Activated B cell treated with CpG ODN at 0.5 μM for 24 hours (primary cell): ENCODE measurements at regions of chr2 and their contacts with region 1.

Region 1: GRCh38 chr2:74037379-74037860 is 52.7 kb downstream of the TET3 start:
- DNase-seq: no peak
- ATAC-seq: peak; percentile 73
- H3K4me3 Mint-ChIP-seq: peak overlapping the region; percentile 62
- H3K27ac Mint-ChIP-seq: peak overlapping the region; percentile 80
- H3K4me1 Mint-ChIP-seq: peaks cover 90% of the 10 kb centered on the region
- H3K27me3 Mint-ChIP-seq: no peaks in the 10 kb centered on the region
- CTCF ChIP-seq: no peak

Region 2: GRCh38 chr2:74025971-74026612 is 11.3 kb before region 1 on chr2:
- CTCF ChIA-PET with region 1: no interaction called
- POLR2A ChIA-PET with region 1: interaction called, 6 read pairs
- intact Hi-C with region 1: loop called (anchors 1 kb)
- DNase-seq: no peak
- ATAC-seq: peak; percentile 37
- H3K4me3 Mint-ChIP-seq: no peak overlapping the region
- H3K27ac Mint-ChIP-seq: peak overlapping the region; percentile 82
- H3K4me1 Mint-ChIP-seq: peaks cover 77% of the 10 kb centered on the region
- H3K27me3 Mint-ChIP-seq: no peaks in the 10 kb centered on the region
- CTCF ChIP-seq: no peak

Region 3: GRCh38 chr2:74052732-74053597 is 15.5 kb after region 1 on chr2:
- CTCF ChIA-PET with region 1: no interaction called
- POLR2A ChIA-PET with region 1: interaction called, 4 read pairs
- intact Hi-C with region 1: loop called (anchors 2 kb)
- DNase-seq: no peak
- ATAC-seq: peak; percentile 91
- H3K4me3 Mint-ChIP-seq: peak overlapping the region; percentile 2
- H3K27ac Mint-ChIP-seq: peak overlapping the region; percentile 13
- H3K4me1 Mint-ChIP-seq: peaks cover 28% of the 10 kb centered on the region
- H3K27me3 Mint-ChIP-seq: no peaks in the 10 kb centered on the region
- CTCF ChIP-seq: no peak

Region 4: GRCh38 chr2:74072565-74072964 is 35.1 kb after region 1 on chr2:
- CTCF ChIA-PET with region 1: no interaction called
- POLR2A ChIA-PET with region 1: no interaction called
- intact Hi-C with region 1: loop called (anchors 5 kb)
- DNase-seq: no peak
- ATAC-seq: no peak
- H3K4me3 Mint-ChIP-seq: no peak overlapping the region
- H3K27ac Mint-ChIP-seq: no peak overlapping the region
- H3K4me1 Mint-ChIP-seq: peaks cover 15% of the 10 kb centered on the region
- H3K27me3 Mint-ChIP-seq: no peaks in the 10 kb centered on the region
- CTCF ChIP-seq: no peak